ENCODE measurements at regions of chr11 and their contacts with region 1.

Region 1: GRCh38 chr11:66222358-66223149 is 45.9 kb upstream of the RAB1B start:
- DNase-seq: peak; percentile 79 to 95 (median 92)
- ATAC-seq: peak; percentile 100
- H3K4me3 ChIP-seq: no peak overlapping the region
- H3K4me3 Mint-ChIP-seq: peak overlapping the region in 4 of 10 donors; percentile 26 to 35 (median 32)
- H3K27ac ChIP-seq: peak overlapping the region; percentile 89
- H3K27ac Mint-ChIP-seq: peak overlapping the region; percentile 78 to 98 (median 92)
- H3K4me1 ChIP-seq: peaks cover 4 to 7% of the 10 kb centered on the region in 2 donors
- H3K4me1 Mint-ChIP-seq: peaks cover 12 to 21% (median 18%) of the 10 kb centered on the region in 7 donors
- H3K27me3 ChIP-seq: no peaks in the 10 kb centered on the region
- H3K27me3 Mint-ChIP-seq: no peaks in the 10 kb centered on the region

Region 2: DNA sequence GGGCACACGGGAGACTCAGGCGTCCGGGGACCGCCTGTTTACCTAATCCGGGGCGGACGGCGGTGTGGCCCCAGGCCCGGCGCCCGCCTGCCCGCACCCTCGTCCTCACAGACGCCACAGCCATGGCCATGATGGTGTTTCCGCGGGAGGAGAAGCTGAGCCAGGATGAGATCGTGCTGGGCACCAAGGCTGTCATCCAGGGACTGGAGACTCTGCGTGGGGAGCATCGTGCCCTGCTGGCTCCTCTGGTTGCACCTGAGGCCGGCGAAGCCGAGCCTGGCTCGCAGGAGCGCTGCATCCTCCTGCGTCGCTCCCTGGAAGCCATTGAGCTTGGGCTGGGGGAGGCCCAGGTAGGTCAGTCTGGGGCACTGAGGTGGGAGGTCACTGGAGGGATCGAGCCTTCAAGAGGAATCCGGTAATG is 35.9 kb after region 1 on chr11:
- CTCF ChIA-PET with region 1: interaction called, 3 read pairs
- POLR2A ChIA-PET with region 1: interaction called, 3 read pairs
- intact Hi-C with region 1: loop called in 1 of 2 experiments (anchors 1 kb)
- DNase-seq: no peak
- ATAC-seq: no peak
- H3K4me3 ChIP-seq: peak overlapping the region; percentile 80
- H3K4me3 Mint-ChIP-seq: peak overlapping the region; percentile 65 to 97 (median 94)
- H3K27ac ChIP-seq: peak overlapping the region; percentile 98
- H3K27ac Mint-ChIP-seq: peak overlapping the region; percentile 34 to 98 (median 81)
- H3K4me1 ChIP-seq: peaks cover 18 to 20% of the 10 kb centered on the region in 2 donors
- H3K4me1 Mint-ChIP-seq: peaks cover 21 to 33% (median 30%) of the 10 kb centered on the region in 7 donors
- H3K27me3 ChIP-seq: no peaks in the 10 kb centered on the region
- H3K27me3 Mint-ChIP-seq: no peaks in the 10 kb centered on the region

Region 3: GRCh38 chr11:66282468-66283386 is 60.2 kb after region 1 on chr11:
- CTCF ChIA-PET with region 1: interaction called, 25 read pairs
- POLR2A ChIA-PET with region 1: interaction called, 5 read pairs
- intact Hi-C with region 1: loop called (anchors 1 kb)
- DNase-seq: peak; percentile 96 to 100 (median 99)
- ATAC-seq: peak; percentile 94
- H3K4me3 ChIP-seq: no peak overlapping the region
- H3K4me3 Mint-ChIP-seq: peak overlapping the region in 9 of 10 donors; percentile 16 to 72 (median 59)
- H3K27ac ChIP-seq: peak overlapping the region; percentile 27
- H3K27ac Mint-ChIP-seq: peak overlapping the region; percentile 68 to 93 (median 85)
- H3K4me1 ChIP-seq: peaks cover 16 to 21% of the 10 kb centered on the region in 2 donors
- H3K4me1 Mint-ChIP-seq: peaks cover 18 to 52% (median 37%) of the 10 kb centered on the region in 7 donors
- H3K27me3 ChIP-seq: no peaks in the 10 kb centered on the region
- H3K27me3 Mint-ChIP-seq: peaks cover 0 to 14% (median 0%) of the 10 kb centered on the region in 5 donors

Region 4: GRCh38 chr11:66386171-66387069 is 163.9 kb after region 1 on chr11:
- CTCF ChIA-PET with region 1: no interaction called
- POLR2A ChIA-PET with region 1: no interaction called
- intact Hi-C with region 1: loop called in 1 of 2 experiments (anchors 1 kb)
- DNase-seq: peak; percentile 59 to 83 (median 75)
- ATAC-seq: peak; percentile 83
- H3K4me3 ChIP-seq: no peak overlapping the region
- H3K4me3 Mint-ChIP-seq: peak overlapping the region; percentile 5 to 71 (median 40)
- H3K27ac ChIP-seq: no peak overlapping the region
- H3K27ac Mint-ChIP-seq: peak overlapping the region in 4 of 9 donors; percentile 0 to 20 (median 6)
- H3K4me1 ChIP-seq: peaks cover 4 to 8% of the 10 kb centered on the region in 2 donors
- H3K4me1 Mint-ChIP-seq: peaks cover 0 to 12% (median 7%) of the 10 kb centered on the region in 7 donors
- H3K27me3 ChIP-seq: no peaks in the 10 kb centered on the region
- H3K27me3 Mint-ChIP-seq: peaks cover 0 to 15% (median 0%) of the 10 kb centered on the region in 5 donors